Ovary (tissue), 10 donors: ENCODE measurements at regions of chr13 and their contacts with region 1.

Region 1: DNA sequence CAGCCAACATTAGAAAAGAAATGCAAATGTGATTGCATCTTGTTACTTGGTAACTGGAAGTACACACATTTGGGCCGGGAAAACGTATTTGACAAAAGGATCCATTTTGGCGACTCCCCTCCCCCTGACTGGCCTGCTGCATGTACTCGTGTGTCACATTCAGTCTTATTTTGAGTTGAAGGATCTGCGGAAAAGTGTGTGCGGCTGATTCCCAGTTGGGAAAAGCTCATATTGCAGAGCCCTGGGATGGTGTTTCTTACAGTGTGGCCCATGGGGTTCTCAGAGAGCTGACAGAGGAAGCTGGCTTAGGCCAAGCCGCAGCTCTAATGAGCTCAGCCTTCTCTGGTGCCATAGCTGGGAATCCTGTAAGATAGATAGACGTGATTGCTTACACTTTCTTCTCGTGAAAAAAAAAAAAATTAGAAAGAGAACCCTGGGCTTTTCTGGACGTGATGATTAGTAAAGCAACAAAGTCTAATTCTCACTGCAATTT is 170.3 kb upstream of the ARGLU1 start:
- DNase-seq: no peak
- H3K4me3 ChIP-seq: no peak overlapping the region
- H3K27ac ChIP-seq: no peak overlapping the region
- H3K4me1 ChIP-seq: no peaks in the 10 kb centered on the region
- H3K27me3 ChIP-seq: no peaks in the 10 kb centered on the region
- CTCF ChIP-seq: no peak
- EP300 ChIP-seq: no peak
- POLR2A ChIP-seq: no peak

Region 2: GRCh38 chr13:106010836-106011235 is 727.4 kb before region 1 on chr13:
- intact Hi-C with region 1: loop called in 1 of 4 experiments (anchors 5 kb)
- DNase-seq: no peak
- H3K4me3 ChIP-seq: no peak overlapping the region
- H3K27ac ChIP-seq: no peak overlapping the region
- H3K4me1 ChIP-seq: no peaks in the 10 kb centered on the region
- H3K27me3 ChIP-seq: no peaks in the 10 kb centered on the region
- CTCF ChIP-seq: no peak
- EP300 ChIP-seq: no peak
- POLR2A ChIP-seq: no peak